WTC11 (cell line): ENCODE measurements at regions of chr22 and their contacts with region 1.

Region 1: DNA sequence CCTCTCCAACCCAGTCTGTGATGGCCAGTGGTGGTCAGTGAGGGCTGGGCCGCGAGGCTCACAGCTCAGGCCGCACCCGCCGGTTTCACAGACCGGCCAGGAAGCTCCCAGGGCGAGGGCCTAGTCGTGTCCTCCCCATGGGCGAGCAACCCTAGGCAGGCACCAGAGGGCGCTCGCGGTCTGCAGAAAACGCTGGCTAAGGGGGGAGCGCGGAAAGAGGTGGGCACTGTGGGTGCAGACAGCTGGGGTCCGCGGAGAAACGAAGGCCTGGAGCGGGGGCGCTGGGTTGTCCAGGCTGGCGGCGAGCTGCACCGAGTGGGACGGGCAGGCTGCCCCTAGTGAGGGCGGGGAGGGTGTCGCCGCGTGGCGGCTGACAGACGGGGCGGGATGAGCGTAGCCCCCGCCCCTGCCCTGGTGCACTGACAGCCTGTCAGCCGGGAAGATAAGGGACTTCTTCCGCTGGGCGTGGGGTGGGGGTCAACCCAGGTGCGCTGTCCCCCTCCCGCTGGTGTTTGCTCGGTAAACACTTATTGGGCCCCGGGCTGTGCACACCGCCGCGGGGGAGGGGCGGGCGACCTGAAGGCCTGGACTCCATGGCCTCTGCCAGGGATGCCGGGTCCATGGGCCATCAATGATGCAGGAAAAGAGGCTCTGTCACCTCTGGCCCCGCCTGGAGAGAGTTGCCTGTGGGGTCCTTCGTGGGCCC is 7.5 kb downstream of the GP1BB start:
- DNase-seq: peak; percentile 90
- ATAC-seq: peak; percentile 89
- H3K4me3 Mint-ChIP-seq: peak overlapping the region; percentile 57
- H3K27ac Mint-ChIP-seq: no peak overlapping the region
- H3K4me1 Mint-ChIP-seq: no peaks in the 10 kb centered on the region
- H3K27me3 Mint-ChIP-seq: peaks cover 48% of the 10 kb centered on the region
- CTCF ChIP-seq: peak; percentile 92

Region 2: DNA sequence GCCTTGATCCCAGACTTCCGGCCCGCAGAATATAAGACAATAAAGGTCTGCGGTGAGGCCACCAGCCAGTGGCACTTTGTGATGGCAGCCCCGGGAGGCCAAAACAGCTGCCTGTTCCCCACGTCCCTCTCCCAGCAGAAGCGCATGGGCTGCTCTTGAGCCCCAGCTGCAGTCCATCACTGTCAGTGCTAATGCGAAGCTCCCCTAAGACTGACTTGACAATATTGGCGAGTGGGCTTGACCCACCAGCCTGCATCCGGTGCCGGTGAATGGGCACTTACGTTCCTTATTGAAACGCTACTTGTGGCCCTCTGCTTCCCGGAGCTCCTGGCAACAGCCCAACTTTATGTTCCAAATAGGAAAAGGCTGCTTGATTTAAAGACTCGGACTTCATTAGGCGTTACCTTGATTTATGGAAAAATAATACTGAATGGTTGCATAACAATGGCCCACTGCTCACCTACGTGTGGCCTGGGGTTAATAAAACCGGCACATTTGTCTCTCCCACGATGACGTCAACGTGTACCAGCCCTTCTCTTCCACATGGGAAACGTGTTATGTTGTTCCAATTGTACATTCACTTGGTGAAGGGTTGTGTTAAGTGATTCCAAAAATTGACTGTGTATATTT is 110.0 kb before region 1 on chr22:
- CTCF ChIA-PET with region 1: no interaction called
- POLR2A ChIA-PET with region 1: no interaction called
- DNase-seq: no peak
- ATAC-seq: no peak
- H3K4me3 Mint-ChIP-seq: no peak overlapping the region
- H3K27ac Mint-ChIP-seq: peak overlapping the region; percentile 89
- H3K4me1 Mint-ChIP-seq: peaks cover 63% of the 10 kb centered on the region
- H3K27me3 Mint-ChIP-seq: no peaks in the 10 kb centered on the region; the same call in 1 of the 2 replicates
- CTCF ChIP-seq: no peak

Region 3: DNA sequence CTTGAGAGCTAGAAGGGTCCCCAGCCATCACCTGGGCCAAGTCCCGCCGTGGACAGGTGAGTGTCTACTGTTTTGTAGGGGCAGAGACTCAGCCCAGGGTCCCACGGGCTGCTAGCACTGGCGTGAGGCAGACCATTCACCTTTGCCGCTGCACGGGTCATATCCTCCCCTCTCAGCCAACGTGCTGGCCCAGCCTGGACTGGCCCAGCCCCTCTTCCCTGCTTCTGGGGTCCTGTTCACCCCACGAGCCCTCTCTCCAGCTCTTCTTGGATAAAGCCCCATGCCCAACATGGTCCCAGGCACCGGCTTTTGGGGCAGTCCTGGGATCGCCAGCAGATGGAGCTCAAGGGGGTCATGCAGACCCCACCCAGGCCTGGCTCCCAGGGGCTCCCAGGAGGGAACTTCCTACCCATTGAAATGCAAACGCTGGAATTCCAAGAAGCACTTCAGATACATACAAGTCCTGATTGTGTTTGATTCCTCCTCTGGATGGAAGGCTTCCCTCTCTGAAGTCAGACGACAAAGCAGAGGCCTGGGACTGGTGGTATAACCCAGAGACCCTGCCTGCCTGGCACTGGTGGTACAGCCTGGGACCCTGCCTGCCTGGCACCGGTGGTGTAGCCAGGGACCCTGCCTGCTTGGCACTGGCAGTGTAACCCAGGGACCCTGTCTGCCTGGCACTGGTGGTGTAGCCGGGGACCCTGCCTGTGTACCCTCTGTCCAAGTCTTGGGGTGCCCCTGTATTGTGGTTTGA is 25.4 kb before region 1 on chr22:
- CTCF ChIA-PET with region 1: interaction called, 16 read pairs
- POLR2A ChIA-PET with region 1: no interaction called
- DNase-seq: peak; percentile 91
- ATAC-seq: peak; percentile 90
- H3K4me3 Mint-ChIP-seq: no peak overlapping the region
- H3K27ac Mint-ChIP-seq: peak overlapping the region; percentile 72; the same call in 1 of the 2 replicates
- H3K4me1 Mint-ChIP-seq: peaks cover 40% of the 10 kb centered on the region
- H3K27me3 Mint-ChIP-seq: peaks cover 3% of the 10 kb centered on the region
- CTCF ChIP-seq: 0 out of 2 replicates have a peak, but pooled peaks have one; percentile 23

Region 4: DNA sequence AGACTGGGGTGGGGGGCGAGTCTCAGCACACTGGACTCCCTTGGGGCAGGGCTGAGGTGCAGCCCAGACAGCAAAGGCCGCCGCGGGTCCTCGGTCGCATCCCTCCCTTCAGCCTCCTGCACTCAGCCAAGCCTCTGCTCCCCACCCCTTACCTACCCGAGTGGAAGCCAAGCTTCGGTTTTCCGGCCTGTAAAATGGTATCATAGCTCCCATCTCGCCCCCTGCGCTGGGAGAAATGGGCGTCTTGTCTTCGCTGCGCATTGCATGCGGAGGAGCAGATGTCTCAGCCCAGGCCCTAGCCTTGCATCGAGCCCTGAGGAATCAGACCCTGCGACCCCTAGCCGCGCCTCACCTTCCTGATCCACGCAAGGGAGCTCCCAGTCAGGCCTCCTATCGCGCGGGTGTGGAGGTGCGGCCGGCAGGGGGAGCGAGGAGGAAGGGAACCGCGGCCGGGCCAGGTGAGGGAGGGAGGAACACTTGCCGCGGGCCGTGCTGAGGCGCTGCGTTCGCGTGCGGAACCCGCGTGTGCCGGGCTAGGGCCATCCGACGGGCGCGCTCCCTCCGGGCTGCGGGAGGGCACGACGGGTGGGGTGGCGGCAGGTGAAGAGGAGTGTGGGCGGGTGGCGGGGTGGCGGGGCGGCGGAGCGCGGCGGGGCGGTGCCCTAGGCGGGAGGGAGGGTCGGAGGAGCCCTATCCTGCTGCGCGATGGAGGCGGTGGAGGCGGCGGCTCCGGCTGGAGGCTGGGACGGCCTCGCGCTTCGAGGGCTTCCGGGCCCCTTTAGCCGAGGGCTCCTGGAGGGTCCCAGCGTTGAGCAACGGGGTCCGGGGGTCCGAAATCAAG is 25.7 kb after region 1 on chr22:
- CTCF ChIA-PET with region 1: interaction called, 110 read pairs
- POLR2A ChIA-PET with region 1: no interaction called
- DNase-seq: peak; percentile 70
- ATAC-seq: peak; percentile 5
- H3K4me3 Mint-ChIP-seq: peak overlapping the region; percentile 29; the same call in 1 of the 2 replicates
- H3K27ac Mint-ChIP-seq: no peak overlapping the region
- H3K4me1 Mint-ChIP-seq: peaks cover 24% of the 10 kb centered on the region
- H3K27me3 Mint-ChIP-seq: peaks cover 89% of the 10 kb centered on the region
- CTCF ChIP-seq: 0 out of 2 replicates have a peak, but pooled peaks have one; percentile 17

Region 5: DNA sequence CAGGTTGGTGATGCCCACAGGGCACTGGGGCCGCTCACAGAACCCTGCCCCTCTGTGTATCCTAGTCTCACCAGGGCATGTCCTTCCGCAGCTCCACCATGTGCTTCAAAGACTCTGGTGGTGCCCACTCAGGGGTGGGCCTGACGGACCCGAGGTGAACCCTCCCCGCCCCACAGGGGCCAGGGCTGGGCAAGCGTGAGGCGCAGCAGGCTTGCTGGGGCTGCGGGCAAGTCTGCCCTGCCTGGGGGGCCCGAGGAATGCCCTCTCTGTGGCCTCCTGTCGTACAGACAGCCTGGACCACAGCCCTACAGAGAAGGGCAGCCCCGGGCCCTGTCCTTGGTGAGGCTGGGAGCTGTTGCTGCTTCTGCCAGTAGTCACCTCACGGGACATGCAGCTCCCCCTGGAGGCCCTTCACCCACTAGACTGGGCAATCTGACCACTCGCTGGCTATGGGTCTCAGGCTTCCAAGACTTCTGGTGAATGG is 70.0 kb after region 1 on chr22:
- CTCF ChIA-PET with region 1: interaction called, 27 read pairs
- POLR2A ChIA-PET with region 1: no interaction called
- DNase-seq: peak; percentile 58
- ATAC-seq: peak; percentile 71
- H3K4me3 Mint-ChIP-seq: no peak overlapping the region
- H3K27ac Mint-ChIP-seq: no peak overlapping the region
- H3K4me1 Mint-ChIP-seq: no peaks in the 10 kb centered on the region
- H3K27me3 Mint-ChIP-seq: no peaks in the 10 kb centered on the region
- CTCF ChIP-seq: no peak

Region 6: DNA sequence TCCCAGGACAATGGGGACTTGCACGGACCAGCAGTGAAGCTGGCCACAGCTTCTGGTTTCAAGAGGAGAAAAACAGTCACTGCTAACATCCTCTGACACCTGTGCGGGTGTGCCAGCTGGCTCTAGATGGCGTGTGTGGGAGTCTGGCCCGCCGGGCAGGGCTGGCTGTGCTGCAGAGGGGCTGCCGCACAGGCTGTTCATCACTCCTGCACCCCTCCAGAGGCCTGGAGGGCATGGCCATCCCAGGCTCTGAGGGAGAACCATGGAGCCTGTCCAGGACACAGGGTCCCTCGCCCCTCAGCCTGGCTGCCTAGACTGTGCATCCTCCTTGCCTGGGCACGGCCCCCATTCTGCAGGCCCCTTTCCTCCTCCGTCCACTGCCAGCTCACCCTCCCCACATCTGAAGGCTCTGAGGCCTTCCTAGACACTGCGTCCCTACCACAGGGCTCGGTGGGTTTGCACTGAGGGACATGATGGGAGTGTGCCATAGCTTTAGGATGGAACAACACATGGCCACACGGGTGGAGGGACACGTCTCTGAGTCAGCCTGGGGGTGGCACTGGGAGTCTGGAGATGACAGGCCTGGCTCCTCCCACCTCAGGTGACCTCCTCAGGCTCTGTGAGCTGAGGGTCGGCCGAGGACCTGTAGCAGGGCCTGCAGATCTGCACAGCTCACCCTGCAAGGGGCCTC is 166.0 kb after region 1 on chr22:
- CTCF ChIA-PET with region 1: interaction called, 56 read pairs
- POLR2A ChIA-PET with region 1: no interaction called
- DNase-seq: no peak
- ATAC-seq: peak; percentile 12
- H3K4me3 Mint-ChIP-seq: no peak overlapping the region
- H3K27ac Mint-ChIP-seq: 0 out of 2 replicates have a peak overlapping the region, but pooled peaks have one; percentile 87
- H3K4me1 Mint-ChIP-seq: peaks cover 13% of the 10 kb centered on the region
- H3K27me3 Mint-ChIP-seq: no peaks in the 10 kb centered on the region; the same call in 1 of the 2 replicates
- CTCF ChIP-seq: no peak

Region 7: GRCh38 chr22:19948057-19948760 is 217.4 kb after region 1 on chr22:
- CTCF ChIA-PET with region 1: interaction called, 28 read pairs
- POLR2A ChIA-PET with region 1: no interaction called
- DNase-seq: no peak
- ATAC-seq: no peak
- H3K4me3 Mint-ChIP-seq: no peak overlapping the region
- H3K27ac Mint-ChIP-seq: no peak overlapping the region
- H3K4me1 Mint-ChIP-seq: peaks cover 19% of the 10 kb centered on the region
- H3K27me3 Mint-ChIP-seq: no peaks in the 10 kb centered on the region
- CTCF ChIP-seq: no peak